ENCODE measurements at regions of chr9 and their contacts with region 1.

Region 1: GRCh38 chr9:33737811-33738606 is 57.4 kb upstream of the PRSS3 start:
- DNase-seq: peak; percentile 52
- H3K4me3 ChIP-seq: no peak overlapping the region
- H3K27ac ChIP-seq: no peak overlapping the region
- H3K4me1 ChIP-seq: no peaks in the 10 kb centered on the region
- H3K27me3 ChIP-seq: no peaks in the 10 kb centered on the region
- CTCF ChIP-seq: peak; percentile 52

Region 2: DNA sequence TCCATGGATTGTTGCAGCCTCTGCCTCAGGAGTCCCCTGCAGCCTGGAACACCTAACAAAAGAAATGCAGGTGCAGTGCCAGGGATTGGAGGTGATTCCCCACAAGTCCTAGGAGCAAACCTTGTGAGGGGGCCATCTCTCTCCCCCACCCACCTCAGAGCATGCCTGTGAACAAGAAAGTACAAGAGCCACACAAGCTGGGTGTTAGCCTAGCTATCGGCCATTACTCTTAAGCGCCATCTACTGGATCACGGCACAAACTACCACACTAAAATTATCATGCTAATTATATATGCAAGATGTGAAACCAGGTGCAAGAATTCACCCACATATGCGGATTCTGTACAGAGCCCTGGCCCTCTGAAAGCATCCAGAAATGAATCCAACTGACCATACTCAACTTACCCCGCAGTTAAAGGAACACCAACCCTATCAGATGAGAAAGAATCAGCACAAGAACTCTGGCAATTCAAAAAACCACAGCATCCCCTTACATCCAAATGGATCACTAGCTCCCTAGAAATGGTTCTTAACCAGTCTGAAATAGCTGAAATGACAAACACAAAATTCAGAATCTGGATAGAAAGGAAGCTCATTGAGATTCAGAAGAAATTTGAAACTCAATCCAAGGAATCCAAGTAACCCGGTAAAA is 40.8 kb after region 1 on chr9:
- intact Hi-C with region 1: loop called (anchors 5 kb)
- DNase-seq: peak; percentile 70
- H3K4me3 ChIP-seq: no peak overlapping the region
- H3K27ac ChIP-seq: no peak overlapping the region
- H3K4me1 ChIP-seq: peaks cover 4% of the 10 kb centered on the region
- H3K27me3 ChIP-seq: no peaks in the 10 kb centered on the region
- CTCF ChIP-seq: peak; percentile 62

Measured in colonic mucosa (tissue), 4 donors.